ENCODE measurements at regions of chr7 and their contacts with region 1.

Region 1: DNA sequence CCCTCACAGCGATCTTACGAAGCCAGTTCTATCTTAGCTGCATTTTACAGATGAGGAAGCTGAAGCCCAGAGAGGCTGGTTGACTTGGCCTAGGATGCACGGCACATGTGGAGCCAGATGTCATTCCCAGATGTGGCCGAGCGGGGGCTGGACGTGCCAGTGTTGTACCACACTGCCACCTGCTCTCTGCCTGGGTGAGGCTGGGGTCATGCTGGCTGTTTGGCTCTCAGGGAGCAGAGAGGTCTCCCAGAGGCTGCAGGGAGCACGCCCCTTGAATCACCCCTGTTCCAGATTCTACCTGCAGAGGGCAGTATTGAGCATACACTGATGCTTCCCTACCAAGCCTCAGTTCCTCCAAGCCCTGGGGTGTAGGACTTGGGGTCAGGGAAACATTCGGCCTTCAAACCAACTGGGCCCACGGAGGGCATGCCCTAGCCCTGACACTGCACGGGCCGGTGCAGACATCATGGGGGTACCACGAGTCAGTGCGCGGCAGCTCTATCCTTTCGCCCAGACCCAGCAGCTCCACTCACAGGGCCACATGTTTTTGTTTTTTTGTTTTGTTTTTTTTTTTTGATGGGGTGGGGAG is 3.8 kb upstream of the GTF2IRD1 start:
- DNase-seq: peak; percentile 92
- H3K4me3 ChIP-seq: no peak overlapping the region
- H3K27ac ChIP-seq: no peak overlapping the region
- H3K4me1 ChIP-seq: peaks cover 0 to 8% of the 10 kb centered on the region in 2 experiments; a peak in 1 of 4 replicates
- H3K27me3 ChIP-seq: no peaks in the 10 kb centered on the region
- CTCF ChIP-seq: peak; percentile 91
- EP300 ChIP-seq: no peak
- RAD21 ChIP-seq: peak; percentile 84

Region 2: DNA sequence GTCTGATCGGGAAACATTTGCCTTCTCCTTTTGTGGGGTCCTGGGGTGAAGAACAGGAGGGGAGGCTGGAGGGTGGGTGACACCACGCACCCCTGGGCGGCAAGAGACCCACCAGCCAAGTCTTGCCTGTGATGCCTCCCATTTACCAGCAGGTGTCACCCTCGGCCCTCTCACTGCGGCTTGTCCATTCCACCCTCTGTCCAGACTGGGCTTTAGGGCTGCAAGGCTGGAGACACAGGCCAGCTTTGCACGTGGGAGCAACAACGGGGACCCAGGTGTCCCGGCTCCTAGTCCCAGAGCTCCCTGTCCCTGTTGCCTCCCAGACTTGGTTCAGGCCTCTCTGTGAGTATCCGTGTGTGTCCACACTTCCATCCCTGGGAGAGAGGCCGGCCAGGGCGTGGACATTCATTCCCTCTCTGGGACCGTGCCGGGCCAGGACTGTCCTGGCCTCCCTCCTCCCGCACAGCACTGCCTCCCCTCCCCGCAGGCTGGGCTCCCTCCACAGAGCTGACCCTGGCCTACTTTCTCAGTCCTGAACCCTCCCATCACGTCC is 32.4 kb before region 1 on chr7:
- CTCF ChIA-PET with region 1: interaction called, 13 read pairs
- POLR2A ChIA-PET with region 1: interaction called, 3 read pairs
- DNase-seq: peak; percentile 97
- H3K4me3 ChIP-seq: peak overlapping the region in 1 of 2 experiments; percentile 6; a peak in 1 of 4 replicates
- H3K27ac ChIP-seq: no peak overlapping the region
- H3K4me1 ChIP-seq: peaks cover 0 to 3% of the 10 kb centered on the region in 2 experiments; a peak in 1 of 4 replicates
- H3K27me3 ChIP-seq: no peaks in the 10 kb centered on the region
- CTCF ChIP-seq: peak; percentile 99
- EP300 ChIP-seq: no peak
- RAD21 ChIP-seq: peak; percentile 100

Region 3: DNA sequence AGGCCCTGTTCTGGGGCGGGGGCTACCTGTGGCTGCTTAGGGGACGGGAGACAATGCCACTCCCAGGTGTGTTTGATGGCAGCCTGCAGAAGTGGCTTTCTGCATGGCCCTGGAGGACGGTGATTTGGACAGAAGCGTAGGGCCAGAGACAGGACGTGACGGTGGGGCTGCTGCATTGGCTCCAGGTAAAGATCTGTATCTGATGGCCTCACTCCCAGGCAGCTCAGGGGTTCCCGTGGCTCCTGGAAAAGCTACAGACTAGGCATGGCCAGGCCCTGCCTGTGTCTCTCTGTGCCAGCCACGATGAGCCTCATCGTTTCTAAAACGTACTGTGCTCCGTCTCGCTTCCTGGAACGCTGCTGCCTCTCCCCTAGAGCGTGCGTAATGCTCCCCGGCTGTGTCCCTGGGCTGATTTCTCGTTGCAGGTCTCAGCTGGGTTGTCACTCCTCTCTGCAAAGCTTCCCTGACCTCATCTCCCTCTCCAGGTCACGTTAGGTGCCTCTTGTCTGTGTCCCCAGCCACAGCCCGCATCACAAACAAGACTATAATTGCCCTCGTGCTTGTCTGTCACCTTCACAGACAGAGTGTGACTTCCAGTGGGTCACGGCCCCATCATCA is 16.4 kb after region 1 on chr7:
- CTCF ChIA-PET with region 1: interaction called, 12 read pairs
- POLR2A ChIA-PET with region 1: no interaction called
- DNase-seq: no peak
- H3K4me3 ChIP-seq: no peak overlapping the region
- H3K27ac ChIP-seq: peak overlapping the region in 1 of 2 experiments; percentile 51; a peak in 1 of 4 replicates
- H3K4me1 ChIP-seq: peaks cover 0 to 8% of the 10 kb centered on the region in 2 experiments; a peak in 1 of 4 replicates
- H3K27me3 ChIP-seq: no peaks in the 10 kb centered on the region
- CTCF ChIP-seq: no peak
- EP300 ChIP-seq: no peak
- RAD21 ChIP-seq: no peak

Region 4: GRCh38 chr7:74502181-74502891 is 52.4 kb after region 1 on chr7:
- CTCF ChIA-PET with region 1: interaction called, 22 read pairs
- POLR2A ChIA-PET with region 1: interaction called, 3 read pairs
- DNase-seq: no peak
- H3K4me3 ChIP-seq: no peak overlapping the region
- H3K27ac ChIP-seq: peak overlapping the region in 1 of 2 experiments; percentile 31; a peak in 1 of 4 replicates
- H3K4me1 ChIP-seq: peaks cover 0 to 33% of the 10 kb centered on the region in 2 experiments; a peak in 1 of 4 replicates
- H3K27me3 ChIP-seq: no peaks in the 10 kb centered on the region
- CTCF ChIP-seq: no peak
- EP300 ChIP-seq: no peak
- RAD21 ChIP-seq: no peak

Region 5: DNA sequence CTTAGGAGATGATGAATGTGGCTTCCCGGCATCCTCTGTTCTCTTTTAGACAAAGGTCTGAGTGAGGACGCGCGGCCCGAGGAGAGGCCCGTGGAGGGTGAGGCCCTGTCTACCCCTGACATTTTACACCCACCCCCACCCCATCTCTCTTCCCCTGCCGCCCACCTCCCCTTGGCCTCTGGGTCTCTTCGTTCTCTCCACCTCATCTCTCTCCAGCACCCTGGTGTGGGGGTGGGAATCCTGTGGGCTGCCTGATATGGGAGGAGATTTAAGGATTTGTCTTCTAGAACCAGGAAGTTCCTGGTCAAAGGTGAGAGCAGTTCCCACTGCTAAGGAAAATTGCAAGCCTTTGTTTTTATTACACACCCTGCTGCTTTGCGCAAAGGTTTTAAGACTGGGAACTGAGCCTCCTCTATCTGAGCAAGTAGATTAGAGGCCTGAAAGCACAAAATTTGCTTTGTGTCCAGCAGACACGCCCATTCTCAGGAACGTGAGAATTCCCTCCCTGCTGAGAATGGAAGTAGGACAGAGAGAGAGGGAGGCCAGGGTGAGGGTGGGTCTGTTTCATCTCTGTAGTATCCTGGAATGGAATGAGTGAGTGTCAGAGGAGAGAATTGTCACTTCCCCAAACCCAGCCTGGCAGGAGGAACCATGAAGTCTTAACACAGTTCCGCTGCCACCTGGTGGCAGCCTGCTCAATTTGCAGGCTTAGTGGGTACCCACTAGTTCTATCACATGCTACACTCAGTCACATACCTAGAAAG is 95.0 kb after region 1 on chr7:
- CTCF ChIA-PET with region 1: interaction called, 10 read pairs
- POLR2A ChIA-PET with region 1: no interaction called
- DNase-seq: peak; percentile 77
- H3K4me3 ChIP-seq: no peak overlapping the region
- H3K27ac ChIP-seq: no peak overlapping the region
- H3K4me1 ChIP-seq: peaks cover 0 to 2% of the 10 kb centered on the region in 2 experiments; a peak in 1 of 4 replicates
- H3K27me3 ChIP-seq: no peaks in the 10 kb centered on the region
- CTCF ChIP-seq: peak; percentile 62
- EP300 ChIP-seq: no peak
- RAD21 ChIP-seq: peak; percentile 72

Measured in SK-N-SH (cell line).